ENCODE measurements at regions of chr18 and their contacts with region 1.

Region 1: GRCh38 chr18:50356036-50356945 is 18.6 kb upstream of the SKA1 start:
- DNase-seq: no peak
- ATAC-seq: no peak
- H3K4me3 ChIP-seq: no peak overlapping the region
- H3K27ac ChIP-seq: no peak overlapping the region
- H3K4me1 ChIP-seq: no peaks in the 10 kb centered on the region
- H3K27me3 ChIP-seq: peaks cover 0 to 13% (median 9%) of the 10 kb centered on the region in 3 donors
- CTCF ChIP-seq: no peak

Region 2: GRCh38 chr18:49944663-49945062 is 411.6 kb before region 1 on chr18:
- intact Hi-C with region 1: loop called in 1 of 2 experiments (anchors 5 kb)
- DNase-seq: peak in 1 of 2 donors; percentile 19
- ATAC-seq: peak in 2 of 4 donors; percentile 57 to 73
- H3K4me3 ChIP-seq: no peak overlapping the region
- H3K27ac ChIP-seq: no peak overlapping the region
- H3K4me1 ChIP-seq: no peaks in the 10 kb centered on the region
- H3K27me3 ChIP-seq: peaks cover 0 to 3% (median 0%) of the 10 kb centered on the region in 3 donors
- CTCF ChIP-seq: peak; percentile 36

Region 3: GRCh38 chr18:50009773-50010335 is 346.4 kb before region 1 on chr18:
- intact Hi-C with region 1: loop called in 1 of 2 experiments (anchors 5 kb)
- DNase-seq: no peak
- ATAC-seq: peak; percentile 65 to 77 (median 70)
- H3K4me3 ChIP-seq: no peak overlapping the region
- H3K27ac ChIP-seq: no peak overlapping the region
- H3K4me1 ChIP-seq: peaks cover 7% of the 10 kb centered on the region
- H3K27me3 ChIP-seq: no peaks in the 10 kb centered on the region
- CTCF ChIP-seq: peak; percentile 56

Region 4: GRCh38 chr18:50218432-50219197 is 137.7 kb before region 1 on chr18:
- intact Hi-C with region 1: loop called in 1 of 2 experiments (anchors 5 kb)
- DNase-seq: no peak
- ATAC-seq: no peak
- H3K4me3 ChIP-seq: no peak overlapping the region
- H3K27ac ChIP-seq: no peak overlapping the region
- H3K4me1 ChIP-seq: no peaks in the 10 kb centered on the region
- H3K27me3 ChIP-seq: no peaks in the 10 kb centered on the region
- CTCF ChIP-seq: peak; percentile 20

Region 5: GRCh38 chr18:50334546-50335152 is 21.6 kb before region 1 on chr18:
- intact Hi-C with region 1: loop called in 1 of 2 experiments (anchors 2 kb)
- DNase-seq: no peak
- ATAC-seq: no peak
- H3K4me3 ChIP-seq: no peak overlapping the region
- H3K27ac ChIP-seq: no peak overlapping the region
- H3K4me1 ChIP-seq: no peaks in the 10 kb centered on the region
- H3K27me3 ChIP-seq: no peaks in the 10 kb centered on the region
- CTCF ChIP-seq: no peak

Measured in psoas muscle (tissue), 8 donors.